ENCODE measurements at regions of chr4 and their contacts with region 1.

Region 1: GRCh38 chr4:98995183-98996055 is at the start of gene METAP1:
- DNase-seq: peak; percentile 87 to 93
- H3K4me3 ChIP-seq: peak within 1 kb of the TSS; percentile 68 to 93 (median 90)
- H3K27ac ChIP-seq: peak within 1 kb of the TSS; percentile 97
- H3K4me1 ChIP-seq: peaks cover 0 to 5% (median 2%) of the 10 kb centered on the region in 4 experiments; a peak in 3 of 7 replicates
- H3K27me3 ChIP-seq: no peaks in the 10 kb centered on the region
- CTCF ChIP-seq: peak; percentile 55 to 80 (median 71)
- EP300 ChIP-seq: no peak
- POLR2A ChIP-seq: peak; percentile 90 to 91
- RAD21 ChIP-seq: peak; percentile 72 to 79
- total RNA-seq, gene METAP1: 80.9 and 85.2 TPM in 2 replicates

Region 2: DNA sequence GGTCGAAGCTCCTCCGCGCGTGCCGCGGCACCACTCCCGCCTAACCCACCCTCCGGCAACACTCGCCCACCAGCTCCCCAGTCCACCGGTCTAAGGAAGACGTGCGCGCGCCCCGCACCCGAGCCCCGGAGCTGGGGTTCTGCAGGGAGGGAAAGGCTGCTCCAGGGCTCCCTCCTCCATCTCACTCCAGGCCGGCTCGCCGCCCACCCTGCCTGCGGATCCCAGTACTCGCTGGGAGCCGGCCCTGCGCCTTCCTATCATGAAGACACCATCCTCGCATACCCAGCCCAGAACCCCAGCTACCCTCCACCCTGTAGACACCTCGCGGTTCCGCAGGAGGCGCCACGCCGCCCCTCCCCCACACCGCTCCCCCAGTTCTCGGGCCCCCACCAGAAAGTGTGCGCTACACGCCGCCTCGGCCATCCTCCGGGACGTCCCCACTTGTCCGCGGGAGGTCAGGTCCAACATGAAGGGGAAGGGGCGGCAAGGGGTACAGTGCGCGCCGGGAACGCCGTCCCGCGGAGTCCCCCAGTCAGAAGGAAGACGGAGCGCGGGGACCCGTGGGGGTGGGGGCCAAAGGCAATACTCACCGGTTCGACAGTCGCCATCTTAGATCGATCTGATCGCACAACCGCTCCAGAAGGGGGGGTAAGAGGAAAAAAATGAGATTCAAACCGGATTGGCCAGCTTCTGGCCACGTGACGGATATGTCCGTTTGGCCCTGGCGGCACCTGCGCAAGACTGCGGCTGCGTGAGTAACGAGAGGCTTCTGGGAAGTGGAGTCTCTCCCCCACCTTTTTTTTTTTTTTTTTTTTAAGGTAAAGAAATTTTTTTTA is 66.7 kb before region 1 on chr4 and contains the start of gene EIF4E:
- CTCF ChIA-PET with region 1: interaction called, 8 read pairs
- POLR2A ChIA-PET with region 1: interaction called, 46 read pairs
- DNase-seq: peak; percentile 90 to 96
- H3K4me3 ChIP-seq: peak within 1 kb of the TSS; percentile 94 to 98 (median 98)
- H3K27ac ChIP-seq: peak within 1 kb of the TSS; percentile 91
- H3K4me1 ChIP-seq: peaks cover 0 to 2% (median 0%) of the 10 kb centered on the region in 4 experiments; a peak in 1 of 7 replicates
- H3K27me3 ChIP-seq: no peaks in the 10 kb centered on the region
- CTCF ChIP-seq: peak in 1 of 3 experiments; percentile 1; a peak in 2 of 4 replicates
- EP300 ChIP-seq: no peak
- POLR2A ChIP-seq: peak; percentile 42 to 59
- RAD21 ChIP-seq: no peak
- total RNA-seq, gene EIF4E: 185 and 210 TPM in 2 replicates

Region 3: GRCh38 chr4:98939892-98940298 is 55.5 kb before region 1 on chr4:
- CTCF ChIA-PET with region 1: no interaction called
- POLR2A ChIA-PET with region 1: interaction called, 10 read pairs
- DNase-seq: no peak
- H3K4me3 ChIP-seq: no peak overlapping the region
- H3K27ac ChIP-seq: no peak overlapping the region
- H3K4me1 ChIP-seq: peaks cover 0 to 8% (median 2%) of the 10 kb centered on the region in 4 experiments; a peak in 3 of 7 replicates
- H3K27me3 ChIP-seq: no peaks in the 10 kb centered on the region
- CTCF ChIP-seq: peak in 2 of 3 experiments; percentile 58 to 76; a peak in 3 of 4 replicates
- EP300 ChIP-seq: no peak
- POLR2A ChIP-seq: no peak
- RAD21 ChIP-seq: peak; percentile 53 to 60

Region 4: GRCh38 chr4:99008051-99008450 is 12.6 kb after region 1 on chr4:
- CTCF ChIA-PET with region 1: interaction called, 4 read pairs
- POLR2A ChIA-PET with region 1: interaction called, 106 read pairs
- DNase-seq: no peak
- H3K4me3 ChIP-seq: no peak overlapping the region
- H3K27ac ChIP-seq: no peak overlapping the region
- H3K4me1 ChIP-seq: peaks cover 0 to 6% (median 2%) of the 10 kb centered on the region in 4 experiments; a peak in 3 of 7 replicates
- H3K27me3 ChIP-seq: no peaks in the 10 kb centered on the region
- CTCF ChIP-seq: no peak
- EP300 ChIP-seq: no peak
- POLR2A ChIP-seq: no peak
- RAD21 ChIP-seq: no peak

Region 5: GRCh38 chr4:99013402-99013843 is 18.0 kb after region 1 on chr4:
- CTCF ChIA-PET with region 1: interaction called, 3 read pairs
- POLR2A ChIA-PET with region 1: interaction called, 106 read pairs
- DNase-seq: no peak
- H3K4me3 ChIP-seq: no peak overlapping the region; a peak in 1 of 8 replicates
- H3K27ac ChIP-seq: no peak overlapping the region; the same call in 1 of the 2 replicates
- H3K4me1 ChIP-seq: peaks cover 0 to 2% (median 0%) of the 10 kb centered on the region in 4 experiments; a peak in 2 of 7 replicates
- H3K27me3 ChIP-seq: no peaks in the 10 kb centered on the region
- CTCF ChIP-seq: no peak
- EP300 ChIP-seq: 0 out of 3 replicates have a peak, but pooled peaks of 1 of the 2 experiments have one; percentile 2
- POLR2A ChIP-seq: peak in 1 of 2 experiments; percentile 63; a peak in 2 of 3 replicates
- RAD21 ChIP-seq: no peak

Region 6: GRCh38 chr4:99028187-99028586 is 32.8 kb after region 1 on chr4:
- CTCF ChIA-PET with region 1: interaction called, 10 read pairs
- POLR2A ChIA-PET with region 1: interaction called, 5 read pairs
- DNase-seq: no peak
- H3K4me3 ChIP-seq: no peak overlapping the region
- H3K27ac ChIP-seq: no peak overlapping the region
- H3K4me1 ChIP-seq: peaks cover 0 to 12% (median 5%) of the 10 kb centered on the region in 4 experiments; a peak in 3 of 7 replicates
- H3K27me3 ChIP-seq: no peaks in the 10 kb centered on the region
- CTCF ChIP-seq: no peak
- EP300 ChIP-seq: no peak
- POLR2A ChIP-seq: no peak
- RAD21 ChIP-seq: no peak

Region 7: DNA sequence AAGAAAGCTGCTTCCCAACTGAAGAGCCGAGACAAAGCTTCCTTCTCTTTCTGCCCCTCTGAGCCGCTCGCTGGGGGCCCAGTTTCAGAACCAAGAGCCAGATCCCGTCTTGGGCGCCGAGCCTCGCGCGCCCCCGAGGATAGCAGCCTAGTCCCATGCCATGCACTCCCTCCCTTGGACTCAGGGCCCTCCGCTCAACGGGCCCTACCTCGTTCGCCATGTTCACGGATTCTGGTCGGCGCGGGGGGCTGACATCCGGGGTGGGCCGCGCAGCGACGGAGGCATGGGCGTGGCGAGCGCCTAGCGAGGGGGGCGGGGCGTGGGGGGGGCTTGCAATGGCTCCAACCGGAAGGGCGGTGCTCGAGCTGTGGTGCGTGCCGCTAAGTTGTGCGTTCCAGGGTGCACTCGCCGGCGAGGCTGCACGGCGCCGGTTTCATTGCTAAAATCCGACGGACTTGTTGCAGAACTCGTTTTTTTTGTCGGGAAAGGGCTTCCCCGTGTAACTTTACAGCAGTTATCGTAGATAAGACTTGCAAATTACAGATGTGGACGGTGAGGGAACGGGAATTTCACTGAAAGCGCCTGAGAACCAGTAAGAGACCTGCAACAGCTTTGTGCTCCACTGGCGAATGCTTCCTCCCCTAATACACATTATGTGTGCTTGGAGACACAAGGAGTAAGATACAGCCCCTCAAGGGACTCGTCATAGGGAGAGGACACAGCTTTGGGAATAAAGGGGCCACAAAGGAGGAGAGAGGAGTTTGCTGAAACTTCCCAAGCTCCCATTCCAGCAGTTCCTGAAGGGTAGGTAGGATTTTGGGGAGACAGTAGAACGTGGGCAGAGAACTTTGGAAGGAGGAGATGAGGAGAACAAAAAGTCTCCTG is 93.3 kb after region 1 on chr4 and contains the start of gene ADH5:
- CTCF ChIA-PET with region 1: interaction called, 4 read pairs
- POLR2A ChIA-PET with region 1: interaction called, 17 read pairs
- DNase-seq: peak; percentile 44 to 84
- H3K4me3 ChIP-seq: peak within 1 kb of the TSS; percentile 63 to 94 (median 82)
- H3K27ac ChIP-seq: peak within 1 kb of the TSS; percentile 93
- H3K4me1 ChIP-seq: peaks cover 0 to 4% (median 1%) of the 10 kb centered on the region in 4 experiments; a peak in 1 of 7 replicates
- H3K27me3 ChIP-seq: no peaks in the 10 kb centered on the region
- CTCF ChIP-seq: no peak
- EP300 ChIP-seq: no peak
- POLR2A ChIP-seq: peak; percentile 88 to 92
- RAD21 ChIP-seq: 0 out of 4 replicates have a peak, but pooled peaks of 1 of the 2 experiments have one; percentile 3
- total RNA-seq, gene ADH5: 322 and 327 TPM in 2 replicates

Measured in H1 (cell line).